GM10248 (cell line): ENCODE measurements at regions of chrX and their contacts with region 1.

Region 1: GRCh38 chrX:30735839-30736238 is 82.6 kb downstream of the GK start:
- DNase-seq: peak; percentile 62
- CTCF ChIP-seq: peak; percentile 47

Region 2: GRCh38 chrX:30713061-30713525 is 22.7 kb before region 1 on chrX:
- CTCF ChIA-PET with region 1: interaction called, 15 read pairs
- POLR2A ChIA-PET with region 1: no interaction called
- DNase-seq: peak; percentile 72
- CTCF ChIP-seq: no peak